Dendritic cell treated with granulocyte-macrophage colony-stimulating factor and Interleukin-4, amounts not matched to agents 40 ng/mL and 50 ng/mL, for 4 days (primary cell): ENCODE measurements at regions of chr5 and their contacts with region 1.

Region 1: GRCh38 chr5:58235299-58235698 is 224.6 kb downstream of the PLK2 start:
- H3K4me3 Mint-ChIP-seq: no peak overlapping the region
- H3K27ac Mint-ChIP-seq: peak overlapping the region; percentile 69
- H3K4me1 Mint-ChIP-seq: peaks cover 20% of the 10 kb centered on the region
- H3K27me3 Mint-ChIP-seq: no peaks in the 10 kb centered on the region

Region 2: DNA sequence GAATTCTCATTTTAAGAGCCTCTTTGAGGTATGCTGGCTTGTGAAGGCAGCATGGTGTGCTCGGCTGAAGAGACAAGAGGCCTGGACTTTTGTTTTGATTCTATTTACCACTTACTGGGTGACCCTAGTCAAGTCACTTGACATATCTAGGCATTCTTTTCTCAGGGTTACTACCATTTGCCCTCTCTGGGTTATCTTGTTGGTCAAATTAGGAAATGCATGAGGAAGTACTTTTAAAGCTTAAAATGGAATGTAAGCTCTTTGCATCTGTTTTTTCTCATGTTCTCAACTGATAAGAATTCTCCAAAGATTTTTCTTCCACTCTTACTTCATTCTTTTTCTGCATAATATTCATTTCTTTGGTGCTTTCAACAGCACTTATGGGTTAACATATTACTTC is 51.4 kb after region 1 on chr5:
- intact Hi-C with region 1: loop called (anchors 5 kb)
- H3K4me3 Mint-ChIP-seq: no peak overlapping the region
- H3K27ac Mint-ChIP-seq: no peak overlapping the region
- H3K4me1 Mint-ChIP-seq: peaks cover 23% of the 10 kb centered on the region
- H3K27me3 Mint-ChIP-seq: no peaks in the 10 kb centered on the region

Region 3: GRCh38 chr5:58410441-58410840 is 175.1 kb after region 1 on chr5:
- intact Hi-C with region 1: loop called (anchors 10 kb)
- H3K4me3 Mint-ChIP-seq: no peak overlapping the region
- H3K27ac Mint-ChIP-seq: no peak overlapping the region
- H3K4me1 Mint-ChIP-seq: peaks cover 19% of the 10 kb centered on the region
- H3K27me3 Mint-ChIP-seq: peaks cover 3% of the 10 kb centered on the region

Region 4: DNA sequence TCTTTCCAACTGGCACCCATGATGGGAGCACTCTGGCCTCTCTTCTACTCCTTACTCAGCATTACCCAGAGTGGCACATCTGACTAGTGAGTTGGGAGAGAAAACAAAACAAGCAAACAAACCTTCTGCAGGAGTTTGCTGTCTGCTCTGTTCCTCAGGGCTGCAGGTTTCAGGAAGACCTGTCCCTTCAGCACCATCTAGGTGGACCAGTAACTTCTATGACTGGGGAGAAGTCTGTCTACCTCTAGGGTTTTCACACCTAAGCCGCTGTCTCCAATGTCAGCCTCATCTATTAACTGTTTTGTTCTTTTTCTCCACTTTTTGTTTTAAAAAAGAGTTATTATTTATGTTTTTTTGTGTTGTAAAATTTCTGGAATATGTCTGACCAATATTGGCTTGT is 406.2 kb after region 1 on chr5:
- intact Hi-C with region 1: no loop called
- H3K4me3 Mint-ChIP-seq: no peak overlapping the region
- H3K27ac Mint-ChIP-seq: no peak overlapping the region
- H3K4me1 Mint-ChIP-seq: no peaks in the 10 kb centered on the region
- H3K27me3 Mint-ChIP-seq: no peaks in the 10 kb centered on the region